ENCODE measurements at regions of chr1 and their contacts with region 1.

Region 1: GRCh38 chr1:92980732-92981647 is 19.7 kb upstream of the DIPK1A start:
- DNase-seq: no peak
- H3K4me3 ChIP-seq: no peak overlapping the region
- H3K27ac ChIP-seq: no peak overlapping the region
- H3K4me1 ChIP-seq: no peaks in the 10 kb centered on the region
- H3K27me3 ChIP-seq: no peaks in the 10 kb centered on the region
- CTCF ChIP-seq: no peak
- POLR2A ChIP-seq: no peak

Region 2: DNA sequence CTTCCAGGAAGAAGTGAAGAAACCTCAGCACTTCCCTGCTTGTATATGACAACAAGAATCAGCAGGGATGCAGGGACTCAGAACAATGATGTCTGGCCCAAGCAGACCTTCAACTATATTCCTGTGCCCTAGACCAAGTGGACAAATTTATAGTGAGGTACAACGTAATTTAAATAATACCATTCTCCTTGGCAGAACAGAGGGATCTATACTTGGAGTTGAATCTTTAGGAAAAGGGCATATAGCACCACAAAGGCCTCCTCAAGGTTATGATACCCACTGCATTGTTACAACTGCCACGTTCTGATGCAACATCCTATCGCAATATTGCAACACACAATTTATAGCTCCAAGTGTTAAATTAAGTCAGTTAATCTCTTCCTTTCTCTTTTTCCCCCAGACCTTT is 465.2 kb before region 1 on chr1:
- intact Hi-C with region 1: no loop called
- DNase-seq: no peak
- H3K4me3 ChIP-seq: no peak overlapping the region
- H3K27ac ChIP-seq: no peak overlapping the region
- H3K4me1 ChIP-seq: no peaks in the 10 kb centered on the region
- H3K27me3 ChIP-seq: no peaks in the 10 kb centered on the region
- CTCF ChIP-seq: no peak
- POLR2A ChIP-seq: no peak

Region 3: GRCh38 chr1:92964998-92965397 is 16.0 kb before region 1 on chr1:
- intact Hi-C with region 1: loop called (anchors 1 kb)
- DNase-seq: no peak
- H3K4me3 ChIP-seq: no peak overlapping the region
- H3K27ac ChIP-seq: no peak overlapping the region
- H3K4me1 ChIP-seq: peaks cover 8% of the 10 kb centered on the region
- H3K27me3 ChIP-seq: no peaks in the 10 kb centered on the region
- CTCF ChIP-seq: no peak
- POLR2A ChIP-seq: no peak

Measured in vagina (tissue), 2 donors.